Aorta (tissue), 5 donors: ENCODE measurements at regions of chr17 and their contacts with region 1.

Region 1: GRCh38 chr17:42853004-42853403 is 2.0 kb downstream of the AOC3 start:
- DNase-seq: peak in 1 of 2 donors; percentile 64
- ATAC-seq: peak; percentile 72
- H3K4me3 ChIP-seq: peak overlapping the region; percentile 84 to 85
- H3K27ac ChIP-seq: peak overlapping the region; percentile 75 to 94
- H3K4me1 ChIP-seq: no peaks in the 10 kb centered on the region
- H3K27me3 ChIP-seq: no peaks in the 10 kb centered on the region

Region 2: DNA sequence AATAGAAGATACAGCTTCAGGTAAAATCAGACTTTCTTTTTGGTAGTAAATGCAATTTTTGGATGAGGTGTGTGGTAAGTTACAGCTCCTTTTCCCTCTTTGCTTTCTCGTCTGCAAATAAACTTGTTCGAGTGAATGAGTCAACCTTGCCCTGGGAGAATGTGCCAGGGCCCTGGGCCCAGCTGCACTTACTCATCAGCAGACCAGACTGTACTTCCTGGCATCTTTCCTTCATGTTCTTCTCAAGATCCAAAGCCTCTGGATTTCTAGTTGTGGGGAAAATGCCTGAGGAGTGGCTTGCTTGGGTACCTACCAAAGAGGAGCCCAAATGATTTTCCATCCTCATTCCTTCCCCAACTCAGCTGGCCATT is 42.2 kb after region 1 on chr17:
- intact Hi-C with region 1: loop called in 1 of 2 experiments (anchors 2 kb)
- DNase-seq: peak; percentile 85 to 88
- ATAC-seq: peak; percentile 78
- H3K4me3 ChIP-seq: no peak overlapping the region
- H3K27ac ChIP-seq: peak overlapping the region in 1 of 2 donors; percentile 29
- H3K4me1 ChIP-seq: peaks cover 0 to 2% of the 10 kb centered on the region in 2 donors
- H3K27me3 ChIP-seq: no peaks in the 10 kb centered on the region

Region 3: GRCh38 chr17:42937712-42938596 is 85.0 kb after region 1 on chr17:
- intact Hi-C with region 1: no loop called
- DNase-seq: peak in 1 of 2 donors; percentile 52
- ATAC-seq: peak; percentile 66
- H3K4me3 ChIP-seq: no peak overlapping the region
- H3K27ac ChIP-seq: no peak overlapping the region
- H3K4me1 ChIP-seq: no peaks in the 10 kb centered on the region
- H3K27me3 ChIP-seq: no peaks in the 10 kb centered on the region

Region 4: DNA sequence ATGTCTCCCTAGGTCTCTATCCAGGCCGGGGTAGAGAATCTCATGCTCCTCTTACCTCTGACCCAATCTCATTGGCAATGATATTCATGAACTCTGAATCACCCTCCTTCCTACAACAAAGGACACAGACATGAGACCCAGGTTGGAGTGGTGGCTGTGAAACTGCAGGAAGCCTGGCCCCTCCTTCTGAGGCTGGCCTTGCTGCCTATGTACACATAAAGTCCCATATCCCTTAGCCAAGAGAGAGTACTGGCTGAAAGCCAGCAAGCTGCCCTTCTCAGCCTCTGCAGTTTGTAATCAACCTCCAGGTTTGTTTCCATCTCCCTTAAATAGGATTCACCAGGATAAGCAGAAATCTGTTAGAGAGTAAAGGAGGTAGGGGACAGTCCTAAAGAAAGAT is 100.7 kb after region 1 on chr17:
- intact Hi-C with region 1: no loop called
- DNase-seq: no peak
- ATAC-seq: no peak
- H3K4me3 ChIP-seq: no peak overlapping the region
- H3K27ac ChIP-seq: no peak overlapping the region
- H3K4me1 ChIP-seq: no peaks in the 10 kb centered on the region
- H3K27me3 ChIP-seq: no peaks in the 10 kb centered on the region